Right cardiac atrium (tissue), 5 donors: ENCODE measurements at regions of chr6 and their contacts with region 1.

Region 1: GRCh38 chr6:145895802-145896201 is 68.4 kb downstream of the SHPRH start:
- DNase-seq: no peak
- ATAC-seq: no peak
- H3K4me3 ChIP-seq: no peak overlapping the region
- H3K27ac ChIP-seq: no peak overlapping the region
- H3K4me1 ChIP-seq: no peaks in the 10 kb centered on the region
- H3K27me3 ChIP-seq: no peaks in the 10 kb centered on the region

Region 2: GRCh38 chr6:145734486-145735355 is 161.1 kb before region 1 on chr6:
- intact Hi-C with region 1: loop called in 1 of 4 experiments (anchors 10 kb)
- DNase-seq: peak; percentile 95 to 98 (median 96)
- ATAC-seq: peak; percentile 95
- H3K4me3 ChIP-seq: peak overlapping the region; percentile 67
- H3K27ac ChIP-seq: peak overlapping the region; percentile 99
- H3K4me1 ChIP-seq: no peaks in the 10 kb centered on the region
- H3K27me3 ChIP-seq: no peaks in the 10 kb centered on the region